ENCODE measurements at regions of chr18 and their contacts with region 1.

Region 1: DNA sequence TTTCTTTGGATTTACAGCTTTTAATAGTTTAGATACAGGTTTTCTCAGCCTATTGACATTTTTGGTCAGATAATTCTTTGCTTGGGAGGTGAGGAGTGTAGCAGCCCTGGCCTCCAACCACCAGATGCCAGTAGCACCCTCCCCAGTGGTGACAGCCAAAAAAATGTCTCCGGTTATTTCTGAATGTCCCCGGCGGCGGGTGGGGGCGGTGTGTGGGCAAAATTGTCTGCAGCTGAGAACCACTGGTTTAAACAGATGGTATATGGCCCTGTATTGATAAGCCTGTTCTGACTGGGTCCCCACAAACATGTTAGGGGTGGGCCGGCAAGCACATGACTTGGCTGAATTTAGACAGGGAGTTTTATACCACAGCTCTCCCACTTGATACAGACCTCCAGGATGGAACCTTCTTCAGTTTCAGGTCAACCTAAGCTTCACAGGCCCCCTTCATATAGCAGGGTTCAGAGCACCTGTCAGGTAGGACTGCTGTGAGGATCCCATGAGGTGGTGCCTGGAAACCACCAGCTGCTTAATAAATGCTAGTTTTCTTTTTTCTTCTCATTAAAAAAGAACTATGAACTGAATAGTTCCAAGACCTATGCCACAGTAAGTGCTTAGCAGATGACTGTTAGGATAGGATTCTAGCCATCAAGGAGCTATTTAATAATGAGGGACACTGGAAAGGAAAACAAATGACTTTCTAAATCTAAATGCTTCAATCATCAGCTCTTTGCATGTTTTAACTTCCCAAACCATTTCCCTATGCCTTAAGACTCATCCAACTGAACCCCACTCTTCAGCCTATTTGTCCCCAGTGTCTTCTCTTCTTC is 18.1 kb downstream of the LPIN2 start:
- DNase-seq: peak; percentile 85 to 95 (median 94)
- H3K4me3 ChIP-seq: peak overlapping the region in 3 of 7 experiments; percentile 27 to 54 (median 45)
- H3K27ac ChIP-seq: peak overlapping the region; percentile 12 to 73
- H3K4me1 ChIP-seq: peaks cover 10 to 38% (median 22%) of the 10 kb centered on the region in 4 experiments
- H3K27me3 ChIP-seq: no peaks in the 10 kb centered on the region

Region 2: DNA sequence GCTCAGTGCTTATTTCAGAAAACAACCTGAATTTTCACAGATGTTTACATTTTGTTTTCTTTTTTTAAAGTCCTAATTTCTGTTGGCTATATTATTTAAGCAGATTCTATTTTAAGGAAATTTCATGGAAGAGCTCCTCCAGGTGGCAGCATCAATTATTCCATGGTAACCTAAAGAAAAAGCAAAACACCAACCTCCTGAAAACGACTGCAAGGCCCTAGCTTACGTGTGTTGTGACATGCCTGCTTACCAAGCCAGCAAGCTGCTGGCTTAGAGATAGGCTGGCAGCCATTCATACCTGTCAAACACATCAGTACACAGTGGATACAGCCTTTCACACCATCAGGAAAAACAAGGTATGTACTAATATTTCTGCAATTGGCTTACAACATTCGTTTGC is 46.8 kb before region 1 on chr18:
- CTCF ChIA-PET with region 1: interaction called, 12 read pairs
- POLR2A ChIA-PET with region 1: no interaction called
- DNase-seq: peak; percentile 47 to 71 (median 59)
- H3K4me3 ChIP-seq: no peak overlapping the region
- H3K27ac ChIP-seq: no peak overlapping the region
- H3K4me1 ChIP-seq: peaks cover 0 to 5% (median 0%) of the 10 kb centered on the region in 4 experiments
- H3K27me3 ChIP-seq: no peaks in the 10 kb centered on the region

Region 3: GRCh38 chr18:2978646-2979045 is 16.2 kb before region 1 on chr18:
- CTCF ChIA-PET with region 1: interaction called, 25 read pairs
- POLR2A ChIA-PET with region 1: interaction called, 3 read pairs
- DNase-seq: no peak
- H3K4me3 ChIP-seq: peak overlapping the region in 1 of 7 experiments; percentile 40
- H3K27ac ChIP-seq: no peak overlapping the region
- H3K4me1 ChIP-seq: peaks cover 48 to 68% (median 58%) of the 10 kb centered on the region in 4 experiments
- H3K27me3 ChIP-seq: no peaks in the 10 kb centered on the region

Region 4: GRCh38 chr18:3015203-3015590 is 20.4 kb after region 1 on chr18:
- CTCF ChIA-PET with region 1: interaction called, 16 read pairs
- POLR2A ChIA-PET with region 1: interaction called, 3 read pairs
- DNase-seq: peak in 1 of 3 donors; percentile 36
- H3K4me3 ChIP-seq: peak overlapping the region in 2 of 7 experiments; percentile 14 to 63
- H3K27ac ChIP-seq: peak overlapping the region in 1 of 2 experiments; percentile 54
- H3K4me1 ChIP-seq: peaks cover 34 to 79% (median 68%) of the 10 kb centered on the region in 4 experiments
- H3K27me3 ChIP-seq: no peaks in the 10 kb centered on the region

Region 5: DNA sequence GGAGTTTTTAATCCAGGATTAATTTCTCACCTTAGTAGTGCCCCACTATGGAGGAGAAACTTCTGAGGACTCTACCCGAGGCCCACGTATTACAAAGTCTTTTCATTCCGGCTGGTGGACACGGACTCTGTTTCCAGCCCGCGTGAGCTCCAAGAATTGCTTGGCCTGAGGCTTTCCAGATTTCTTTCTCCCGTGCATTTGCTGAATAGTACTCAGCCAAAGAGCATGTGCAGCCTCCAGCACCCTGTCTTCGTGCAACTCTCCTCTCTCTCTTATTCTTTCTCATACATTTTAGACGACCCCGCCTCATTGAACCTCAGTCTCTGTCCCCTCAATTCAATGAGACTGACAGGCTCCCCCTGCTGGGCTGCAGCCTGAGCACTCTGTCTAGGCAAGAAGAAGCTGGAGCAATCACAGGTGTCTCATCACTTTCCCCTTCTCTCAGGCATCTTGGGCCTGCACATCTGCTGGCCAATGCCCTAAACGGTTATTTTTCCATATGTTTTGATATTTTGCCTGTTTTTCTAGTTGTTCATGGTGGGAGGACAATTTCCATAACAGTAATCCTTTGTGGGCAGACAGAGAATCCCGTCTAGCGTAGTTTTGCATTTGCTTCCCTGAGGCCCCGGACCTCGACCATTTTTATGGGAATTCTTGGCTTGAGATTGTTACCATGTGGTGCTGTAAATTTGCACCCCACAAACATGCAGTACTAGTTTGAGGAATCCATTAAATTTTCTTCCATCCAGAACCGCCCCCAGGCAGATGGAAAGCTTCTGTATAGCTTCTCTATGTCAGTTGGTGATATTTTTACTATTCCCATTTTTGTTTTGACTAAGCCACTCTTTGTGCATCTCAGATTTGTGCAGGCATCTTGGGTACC is 68.2 kb after region 1 on chr18:
- CTCF ChIA-PET with region 1: interaction called, 129 read pairs
- POLR2A ChIA-PET with region 1: interaction called, 6 read pairs
- DNase-seq: peak; percentile 58 to 66 (median 64)
- H3K4me3 ChIP-seq: peak overlapping the region in 2 of 7 experiments; percentile 2 to 43
- H3K27ac ChIP-seq: no peak overlapping the region
- H3K4me1 ChIP-seq: peaks cover 16 to 49% (median 39%) of the 10 kb centered on the region in 4 experiments
- H3K27me3 ChIP-seq: no peaks in the 10 kb centered on the region

Region 6: GRCh38 chr18:3129053-3129864 is 134.4 kb after region 1 on chr18:
- CTCF ChIA-PET with region 1: interaction called, 42 read pairs
- POLR2A ChIA-PET with region 1: no interaction called
- DNase-seq: peak; percentile 83 to 91 (median 91)
- H3K4me3 ChIP-seq: peak overlapping the region in 1 of 7 experiments; percentile 46
- H3K27ac ChIP-seq: no peak overlapping the region
- H3K4me1 ChIP-seq: peaks cover 0 to 4% (median 0%) of the 10 kb centered on the region in 4 experiments
- H3K27me3 ChIP-seq: no peaks in the 10 kb centered on the region

Region 7: GRCh38 chr18:3245853-3246634 is 251.2 kb after region 1 on chr18:
- CTCF ChIA-PET with region 1: interaction called, 68 read pairs
- POLR2A ChIA-PET with region 1: interaction called, 14 read pairs
- DNase-seq: peak; percentile 90 to 95 (median 94)
- H3K4me3 ChIP-seq: peak overlapping the region; percentile 80 to 99 (median 93)
- H3K27ac ChIP-seq: peak overlapping the region; percentile 95 to 98
- H3K4me1 ChIP-seq: peaks cover 23 to 46% (median 37%) of the 10 kb centered on the region in 4 experiments
- H3K27me3 ChIP-seq: no peaks in the 10 kb centered on the region